ENCODE measurements at regions of chr9 and their contacts with region 1.

Region 1: GRCh38 chr9:99819856-99820684 is 1.6 kb upstream of the NR4A3 start:
- DNase-seq: peak; percentile 96
- ATAC-seq: peak; percentile 79

Region 2: GRCh38 chr9:99259231-99259918 is 560.7 kb before region 1 on chr9:
- intact Hi-C with region 1: loop called (anchors 1 kb)
- DNase-seq: peak; percentile 91
- ATAC-seq: peak; percentile 95

Region 3: GRCh38 chr9:99356512-99356971 is 463.5 kb before region 1 on chr9:
- intact Hi-C with region 1: loop called (anchors 1 kb)
- DNase-seq: peak; percentile 81
- ATAC-seq: peak; percentile 71

Region 4: DNA sequence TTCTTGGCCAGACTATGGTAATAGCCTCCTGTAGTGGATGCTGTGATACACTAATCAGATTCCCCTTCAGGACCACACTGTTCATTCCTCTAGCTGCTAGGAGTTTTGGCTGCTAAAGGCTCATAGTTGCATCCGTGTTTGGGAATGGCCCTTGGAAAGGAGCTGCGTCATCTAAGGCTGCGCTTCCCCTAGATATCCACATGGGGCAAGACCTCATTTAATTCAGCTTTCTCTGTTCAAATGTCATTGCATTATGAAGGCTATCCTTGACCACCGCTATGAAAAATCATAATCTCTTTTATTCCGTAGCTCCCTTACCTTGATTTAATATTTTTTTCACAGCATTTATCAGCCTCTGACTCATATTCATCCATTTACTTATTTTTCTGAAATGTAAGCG is 256.7 kb before region 1 on chr9:
- intact Hi-C with region 1: loop called (anchors 5 kb)
- DNase-seq: no peak
- ATAC-seq: no peak

Region 5: GRCh38 chr9:100011062-100011681 is 191.1 kb after region 1 on chr9:
- intact Hi-C with region 1: loop called (anchors 10 kb)
- DNase-seq: no peak
- ATAC-seq: no peak